ENCODE measurements at regions of chr16 and their contacts with region 1.

Region 1: GRCh38 chr16:3023669-3024478 is at the starts of genes HCFC1R1 and THOC6:
- DNase-seq: peak; percentile 96
- ATAC-seq: peak; percentile 66
- H3K4me3 ChIP-seq: peak within 1 kb of the TSS; percentile 62 to 93 (median 65)
- H3K27ac ChIP-seq: peak within 1 kb of the TSS; percentile 93
- H3K4me1 ChIP-seq: peaks cover 50% of the 10 kb centered on the region
- H3K27me3 ChIP-seq: peaks cover 0 to 4% of the 10 kb centered on the region in 2 experiments; a peak in 3 of 5 replicates
- CTCF ChIP-seq: peak; percentile 42; the same call in 1 of the 2 replicates
- EP300 ChIP-seq: no peak
- POLR2A ChIP-seq: peak; percentile 81 to 93
- RAD21 ChIP-seq: no peak; the same call in none of the 2 replicates
- total RNA-seq, gene HCFC1R1: 8.3 and 16.1 TPM in 2 replicates
- total RNA-seq, gene THOC6: 37.0 TPM in 2 replicates

Region 2: GRCh38 chr16:2968738-2969544 is 54.9 kb before region 1 on chr16 and contains the start of gene PAQR4:
- CTCF ChIA-PET with region 1: no interaction called
- POLR2A ChIA-PET with region 1: interaction called, 17 read pairs
- in situ Hi-C with region 1: no loop called
- intact Hi-C with region 1: no loop called
- DNase-seq: peak; percentile 80
- ATAC-seq: peak; percentile 71
- H3K4me3 ChIP-seq: peak within 1 kb of the TSS; percentile 86 to 91 (median 91)
- H3K27ac ChIP-seq: peak within 1 kb of the TSS; percentile 76
- H3K4me1 ChIP-seq: peaks cover 17% of the 10 kb centered on the region
- H3K27me3 ChIP-seq: no peaks in the 10 kb centered on the region; a peak in 1 of 5 replicates
- CTCF ChIP-seq: peak; percentile 30
- EP300 ChIP-seq: peak in 1 of 2 experiments; percentile 28; a peak in 1 of 4 replicates
- POLR2A ChIP-seq: peak; percentile 33 to 80; a peak in 3 of 4 replicates
- RAD21 ChIP-seq: no peak; the same call in 1 of the 2 replicates
- total RNA-seq, gene PAQR4: 15.6 and 24.8 TPM in 2 replicates

Region 3: GRCh38 chr16:2980227-2981086 is 43.4 kb before region 1 on chr16 and contains the start of gene PKMYT1:
- CTCF ChIA-PET with region 1: no interaction called
- POLR2A ChIA-PET with region 1: interaction called, 48 read pairs
- in situ Hi-C with region 1: no loop called
- intact Hi-C with region 1: no loop called
- DNase-seq: peak; percentile 73
- ATAC-seq: peak; percentile 83
- H3K4me3 ChIP-seq: peak within 1 kb of the TSS; percentile 86 to 95 (median 88)
- H3K27ac ChIP-seq: peak within 1 kb of the TSS; percentile 87
- H3K4me1 ChIP-seq: peaks cover 26% of the 10 kb centered on the region
- H3K27me3 ChIP-seq: peaks cover under 1 to 11% of the 10 kb centered on the region in 2 experiments; a peak in 4 of 5 replicates
- CTCF ChIP-seq: no peak; the same call in 1 of the 2 replicates
- EP300 ChIP-seq: no peak
- POLR2A ChIP-seq: peak; percentile 82 to 96
- RAD21 ChIP-seq: no peak
- total RNA-seq, gene PKMYT1: 8.4 and 27.8 TPM in 2 replicates

Region 4: DNA sequence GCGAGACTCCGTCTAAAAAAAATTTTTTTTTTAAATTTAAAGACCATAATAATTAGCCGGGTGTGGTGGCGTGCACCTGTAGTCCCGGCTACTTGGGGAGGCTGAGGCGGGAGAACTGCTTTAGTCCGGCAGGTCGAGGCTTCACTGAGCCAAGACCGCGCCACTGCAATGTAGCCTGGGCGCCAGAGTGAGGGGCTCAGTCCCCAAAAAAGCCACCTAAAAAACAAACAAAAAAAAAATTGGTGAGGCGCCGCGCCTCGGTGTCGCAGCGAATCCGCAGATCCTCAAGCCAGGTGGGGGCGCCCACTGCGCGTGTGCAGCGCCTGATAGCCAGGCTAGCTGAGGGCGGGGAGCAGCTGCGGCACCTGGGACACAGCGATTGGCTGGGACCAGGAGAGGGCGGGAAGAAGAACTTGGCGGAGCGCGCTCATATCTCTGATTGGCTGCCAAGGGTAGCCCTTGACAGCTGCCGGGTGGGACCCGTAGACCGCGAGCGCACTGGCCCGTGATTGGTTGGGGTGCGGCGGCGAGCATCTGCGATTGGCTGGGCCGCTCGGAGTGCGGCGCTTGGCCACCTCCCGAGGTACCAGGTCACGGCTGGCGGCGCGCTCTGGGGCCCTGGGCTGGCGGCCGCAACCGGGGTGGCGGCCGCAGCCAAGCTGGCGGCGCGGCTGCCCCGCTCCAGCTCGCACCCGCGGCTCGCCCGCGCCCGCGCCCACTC is 20.1 kb before region 1 on chr16:
- CTCF ChIA-PET with region 1: interaction called, 11 read pairs
- POLR2A ChIA-PET with region 1: interaction called, 750 read pairs
- in situ Hi-C with region 1: no loop called
- intact Hi-C with region 1: loop called (anchors 1 kb)
- DNase-seq: peak; percentile 97
- ATAC-seq: peak; percentile 91
- H3K4me3 ChIP-seq: peak overlapping the region in 2 of 3 experiments; percentile 27 to 46; a peak in 2 of 6 replicates
- H3K27ac ChIP-seq: no peak overlapping the region
- H3K4me1 ChIP-seq: peaks cover 49% of the 10 kb centered on the region
- H3K27me3 ChIP-seq: no peaks in the 10 kb centered on the region
- CTCF ChIP-seq: peak; percentile 98
- EP300 ChIP-seq: 0 out of 4 replicates have a peak, but pooled peaks of 1 of the 2 experiments have one; percentile 4
- POLR2A ChIP-seq: no peak; a peak in 1 of 4 replicates
- RAD21 ChIP-seq: peak; percentile 96

Region 5: GRCh38 chr16:3035302-3036234 is 11.7 kb after region 1 on chr16:
- CTCF ChIA-PET with region 1: no interaction called
- POLR2A ChIA-PET with region 1: interaction called, 39 read pairs
- in situ Hi-C with region 1: no loop called
- intact Hi-C with region 1: no loop called
- DNase-seq: no peak
- ATAC-seq: no peak
- H3K4me3 ChIP-seq: peak overlapping the region in 1 of 3 experiments; percentile 58; a peak in 1 of 6 replicates
- H3K27ac ChIP-seq: no peak overlapping the region
- H3K4me1 ChIP-seq: peaks cover 21% of the 10 kb centered on the region
- H3K27me3 ChIP-seq: peaks cover 19 to 85% of the 10 kb centered on the region in 2 experiments
- CTCF ChIP-seq: no peak
- EP300 ChIP-seq: no peak
- POLR2A ChIP-seq: no peak
- RAD21 ChIP-seq: no peak

Region 6: GRCh38 chr16:3065069-3065741 is 41.3 kb after region 1 on chr16 and contains the start of gene IL32:
- CTCF ChIA-PET with region 1: no interaction called
- POLR2A ChIA-PET with region 1: interaction called, 16 read pairs
- in situ Hi-C with region 1: no loop called
- intact Hi-C with region 1: no loop called
- DNase-seq: peak; percentile 87
- ATAC-seq: peak; percentile 77
- H3K4me3 ChIP-seq: peak within 1 kb of the TSS; percentile 57 to 90 (median 71)
- H3K27ac ChIP-seq: peak within 1 kb of the TSS; percentile 82
- H3K4me1 ChIP-seq: peaks cover 37% of the 10 kb centered on the region
- H3K27me3 ChIP-seq: no peaks in the 10 kb centered on the region; a peak in 2 of 5 replicates
- CTCF ChIP-seq: 0 out of 2 replicates have a peak, but pooled peaks have one; percentile 8
- EP300 ChIP-seq: peak in 1 of 2 experiments; percentile 59; a peak in 2 of 4 replicates
- POLR2A ChIP-seq: peak; percentile 72 to 75
- RAD21 ChIP-seq: no peak
- total RNA-seq, gene IL32: 115 and 127 TPM in 2 replicates

Measured in HepG2 (cell line).